Activated naive CD4-positive, alpha-beta T cell treated with anti-CD3 and anti-CD28 coated beads, Interleukin-2, amount 10 ng/mL, durations not matched to agents 7 days and 5 days (primary cell): ENCODE measurements at regions of chr16 and their contacts with region 1.

Region 1: DNA sequence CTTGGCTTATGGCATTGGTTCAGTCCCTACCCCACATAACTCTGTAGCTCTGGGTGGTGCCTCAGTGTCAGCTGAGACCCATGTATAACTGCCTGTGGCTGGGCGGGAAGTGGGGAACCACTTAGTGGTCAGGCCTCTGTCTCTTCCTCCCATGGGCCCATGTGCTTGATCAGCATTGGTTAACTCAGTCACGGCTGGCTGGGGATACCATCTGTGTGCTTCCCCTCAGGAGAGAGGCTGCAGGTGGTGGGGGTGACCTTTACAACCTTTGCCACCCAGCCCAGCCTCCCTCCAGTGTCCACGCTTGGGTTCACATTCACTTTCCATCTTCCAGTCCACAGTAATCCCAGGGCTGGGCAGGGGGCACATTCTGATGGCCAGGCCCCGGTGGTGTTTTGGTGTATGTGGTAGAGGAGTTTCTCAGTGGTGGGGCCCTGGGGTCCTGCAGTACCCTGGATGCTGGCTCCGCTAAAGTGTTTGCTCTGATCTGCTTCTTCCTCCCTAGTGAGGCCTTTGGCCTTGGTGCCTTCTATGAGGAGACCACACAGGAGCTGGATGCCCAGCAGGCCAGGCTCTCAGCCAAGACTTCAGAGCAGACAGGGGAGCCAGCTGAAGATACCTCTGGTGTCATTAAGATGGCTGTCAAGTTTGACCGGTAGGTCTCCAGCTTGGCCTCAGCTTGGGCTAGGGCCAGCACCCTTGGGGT is 10.2 kb upstream of the NFATC3 start:
- DNase-seq: peak; percentile 90
- H3K4me3 Mint-ChIP-seq: peak overlapping the region; percentile 43
- H3K27ac Mint-ChIP-seq: peak overlapping the region; percentile 93
- H3K4me1 Mint-ChIP-seq: peaks cover 92% of the 10 kb centered on the region
- H3K27me3 Mint-ChIP-seq: no peaks in the 10 kb centered on the region

Region 2: DNA sequence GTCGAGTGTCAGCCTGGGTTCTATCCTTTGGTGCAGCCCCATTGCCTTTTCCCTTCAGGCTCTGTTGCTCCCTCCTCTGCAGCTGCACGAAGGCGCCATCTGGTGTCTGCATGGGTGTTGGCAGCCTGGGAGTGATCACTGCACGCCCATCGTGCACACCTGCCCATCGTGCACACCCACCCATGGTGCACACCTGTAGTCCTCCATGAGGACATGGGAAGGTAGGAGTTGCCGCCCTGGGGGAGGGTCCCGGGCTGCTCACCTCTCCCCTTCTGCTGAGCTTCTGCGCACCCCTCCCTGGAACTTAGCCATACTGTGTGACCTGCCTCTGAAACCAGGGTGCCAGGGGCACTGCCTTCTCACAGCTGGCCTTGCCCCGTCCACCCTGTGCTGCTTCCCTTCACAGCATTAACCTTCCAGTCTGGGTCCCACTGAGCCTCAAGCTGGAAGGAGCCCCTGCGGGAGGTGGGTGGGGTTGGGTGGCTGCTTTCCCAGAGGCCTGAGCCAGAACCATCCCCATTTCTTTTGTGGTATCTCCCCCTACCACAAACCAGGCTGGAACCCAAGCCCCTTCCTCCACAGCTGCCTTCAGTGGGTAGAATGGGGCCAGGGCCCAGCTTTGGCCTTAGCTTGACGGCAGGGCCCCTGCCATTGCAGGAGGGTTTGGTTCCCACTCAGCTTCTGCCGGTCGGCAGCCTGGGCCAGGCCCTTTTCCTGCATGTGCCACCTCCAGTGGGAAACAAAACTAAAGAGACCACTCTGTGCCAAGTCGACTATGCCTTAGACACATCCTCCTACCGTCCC is 146.2 kb before region 1 on chr16:
- CTCF ChIA-PET with region 1: no interaction called
- DNase-seq: peak; percentile 88
- H3K4me3 Mint-ChIP-seq: no peak overlapping the region
- H3K27ac Mint-ChIP-seq: peak overlapping the region; percentile 58
- H3K4me1 Mint-ChIP-seq: peaks cover 4% of the 10 kb centered on the region
- H3K27me3 Mint-ChIP-seq: no peaks in the 10 kb centered on the region

Region 3: GRCh38 chr16:68064791-68065365 is 10.1 kb before region 1 on chr16:
- CTCF ChIA-PET with region 1: interaction called, 14 read pairs
- DNase-seq: peak; percentile 85
- H3K4me3 Mint-ChIP-seq: no peak overlapping the region
- H3K27ac Mint-ChIP-seq: peak overlapping the region; percentile 88
- H3K4me1 Mint-ChIP-seq: peaks cover 83% of the 10 kb centered on the region
- H3K27me3 Mint-ChIP-seq: no peaks in the 10 kb centered on the region

Region 4: GRCh38 chr16:68085259-68086071 is 10.5 kb after region 1 on chr16 and contains the start of gene NFATC3:
- CTCF ChIA-PET with region 1: interaction called, 64 read pairs
- DNase-seq: peak; percentile 99
- H3K4me3 Mint-ChIP-seq: peak within 1 kb of the TSS; percentile 87
- H3K27ac Mint-ChIP-seq: peak within 1 kb of the TSS; percentile 96
- H3K4me1 Mint-ChIP-seq: peaks cover 66% of the 10 kb centered on the region
- H3K27me3 Mint-ChIP-seq: no peaks in the 10 kb centered on the region

Region 5: DNA sequence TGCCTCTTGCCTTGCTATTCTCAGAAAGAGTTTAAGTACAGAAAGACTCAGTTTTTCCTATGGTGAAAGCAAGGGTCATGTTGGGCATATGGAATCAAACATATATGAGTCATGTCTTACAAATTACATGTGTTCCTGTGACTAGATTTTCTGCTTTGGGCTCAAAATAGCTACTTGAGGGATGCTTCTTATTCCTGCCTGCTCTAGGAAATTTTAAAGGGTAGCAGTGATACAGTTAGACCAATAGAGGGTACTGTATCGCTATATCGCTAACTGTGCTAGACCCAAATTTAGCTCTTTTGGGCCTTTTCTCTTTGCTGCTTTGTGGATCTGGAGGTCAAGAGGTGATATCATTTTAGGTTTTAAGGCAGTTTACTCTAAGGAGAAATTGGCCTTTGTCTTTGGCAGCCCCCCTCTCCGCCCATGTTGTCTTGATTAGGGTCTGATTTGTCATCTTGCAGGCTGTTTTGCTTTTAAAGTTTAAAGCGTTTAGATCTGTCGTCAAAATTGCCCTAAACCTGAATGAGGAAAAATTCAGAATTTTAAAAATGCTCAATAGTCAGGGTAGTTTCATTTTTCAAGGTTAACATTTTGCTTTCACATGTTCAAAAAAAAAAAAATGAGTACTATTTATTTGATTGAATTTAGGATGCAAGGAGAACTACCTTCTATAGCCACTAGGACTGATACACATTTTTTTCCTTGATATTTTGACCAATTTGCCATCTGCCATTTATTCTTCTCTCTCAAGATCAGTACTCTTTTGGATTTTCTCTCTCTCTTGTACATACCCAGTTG is 19.0 kb after region 1 on chr16:
- CTCF ChIA-PET with region 1: interaction called, 23 read pairs
- DNase-seq: no peak
- H3K4me3 Mint-ChIP-seq: no peak overlapping the region
- H3K27ac Mint-ChIP-seq: no peak overlapping the region
- H3K4me1 Mint-ChIP-seq: peaks cover 69% of the 10 kb centered on the region
- H3K27me3 Mint-ChIP-seq: no peaks in the 10 kb centered on the region

Region 6: DNA sequence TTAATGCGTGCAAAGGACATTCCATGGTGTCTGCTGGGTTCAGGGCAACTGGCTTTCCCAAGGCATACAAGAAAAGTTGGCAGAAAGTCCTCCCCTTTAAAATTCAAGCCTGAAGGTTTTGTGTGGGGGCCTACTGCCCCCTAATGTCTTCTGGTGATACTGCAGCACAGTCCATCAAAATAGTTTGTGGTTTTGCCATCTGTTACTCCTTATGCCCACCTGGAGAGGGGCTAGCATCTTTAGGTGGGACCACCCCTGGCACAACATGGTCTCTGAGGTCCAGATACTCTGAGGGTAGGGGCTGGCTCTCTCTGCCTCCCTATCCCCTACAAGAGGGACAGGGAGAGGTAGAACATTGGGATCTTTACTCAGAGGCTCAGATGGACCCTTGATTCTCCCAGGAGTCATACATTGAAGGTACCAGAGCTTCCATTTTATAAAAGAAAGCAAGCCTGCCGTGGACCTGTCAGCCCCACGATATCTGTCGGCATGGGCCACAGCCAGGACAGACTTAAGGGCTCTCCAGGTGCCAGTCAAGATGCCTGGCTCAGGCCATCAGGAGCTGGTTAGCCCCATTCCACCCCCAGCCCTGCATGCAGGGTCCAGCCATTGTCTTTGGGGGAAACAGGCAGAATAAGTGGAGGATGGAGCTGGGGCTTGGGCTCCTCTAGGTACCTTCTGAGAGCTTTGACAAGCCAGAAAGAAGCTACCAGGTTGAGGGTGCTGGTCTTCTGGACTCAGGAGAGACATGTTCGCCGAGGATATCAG is 154.6 kb after region 1 on chr16:
- CTCF ChIA-PET with region 1: interaction called, 16 read pairs
- DNase-seq: peak; percentile 62
- H3K4me3 Mint-ChIP-seq: no peak overlapping the region
- H3K27ac Mint-ChIP-seq: peak overlapping the region; percentile 52
- H3K4me1 Mint-ChIP-seq: peaks cover 40% of the 10 kb centered on the region
- H3K27me3 Mint-ChIP-seq: no peaks in the 10 kb centered on the region